Esophagus squamous epithelium (tissue), 5 donors: ENCODE measurements at regions of chr1 and their contacts with region 1.

Region 1: DNA sequence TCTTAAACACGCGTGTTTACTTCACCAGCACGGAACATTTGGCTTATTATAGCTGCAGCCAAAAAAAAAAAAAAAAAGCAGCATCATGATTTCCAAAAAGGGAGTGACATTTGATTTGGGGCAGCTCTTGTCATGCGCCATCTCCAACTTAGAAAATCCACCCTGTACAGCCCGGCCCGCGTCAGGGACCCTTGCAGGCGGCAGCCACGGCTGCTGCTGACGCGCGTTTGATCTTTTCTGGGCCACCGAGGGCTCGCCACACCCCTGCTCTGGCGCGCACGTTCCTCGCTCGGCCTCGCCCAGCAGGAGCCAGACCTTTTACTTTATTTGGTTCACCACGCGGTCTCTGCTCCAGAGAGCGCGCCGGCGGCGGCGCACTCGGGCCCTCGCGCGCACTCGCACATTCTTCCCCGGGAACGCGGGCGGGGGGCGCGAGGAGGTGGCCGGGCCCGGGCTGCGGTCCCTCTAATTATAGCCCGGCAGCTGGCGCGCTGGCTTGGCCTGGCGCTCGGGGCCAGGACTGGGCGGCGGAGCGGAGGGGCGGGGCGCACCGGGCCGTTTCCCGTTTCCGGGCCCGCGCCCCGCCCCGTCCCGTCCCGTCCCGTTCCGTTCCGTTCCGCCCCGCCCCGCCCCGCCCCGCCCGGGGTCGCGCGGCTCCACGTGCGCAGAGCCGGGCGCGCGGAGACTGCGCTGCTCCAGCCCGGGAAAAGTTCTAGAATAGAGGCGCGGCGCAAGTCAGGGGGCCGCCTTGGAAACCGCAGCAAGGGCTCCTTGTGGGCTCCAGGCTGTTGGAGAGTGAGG is 10.2 kb downstream of the IRF2BP2 start:
- DNase-seq: peak; percentile 63
- H3K4me3 ChIP-seq: peak overlapping the region; percentile 41 to 79 (median 52)
- H3K27ac ChIP-seq: peak overlapping the region; percentile 99 to 100 (median 100)
- H3K4me1 ChIP-seq: peaks cover 13 to 69% (median 45%) of the 10 kb centered on the region in 3 donors
- H3K27me3 ChIP-seq: no peaks in the 10 kb centered on the region
- CTCF ChIP-seq: peak in 1 of 6 experiments; percentile 9
- POLR2A ChIP-seq: peak in 3 of 4 donors; percentile 62 to 91 (median 81)

Region 2: GRCh38 chr1:234499119-234499942 is 100.5 kb before region 1 on chr1:
- intact Hi-C with region 1: loop called (anchors 5 kb)
- DNase-seq: peak; percentile 45
- H3K4me3 ChIP-seq: peak overlapping the region in 3 of 4 donors; percentile 24 to 51 (median 27)
- H3K27ac ChIP-seq: peak overlapping the region; percentile 87 to 94 (median 88)
- H3K4me1 ChIP-seq: peaks cover 13 to 46% (median 29%) of the 10 kb centered on the region in 3 donors
- H3K27me3 ChIP-seq: no peaks in the 10 kb centered on the region
- CTCF ChIP-seq: peak; percentile 87 to 98 (median 96)
- POLR2A ChIP-seq: no peak

Region 3: GRCh38 chr1:234533975-234534876 is 65.6 kb before region 1 on chr1:
- intact Hi-C with region 1: loop called (anchors 5 kb)
- DNase-seq: no peak
- H3K4me3 ChIP-seq: peak overlapping the region in 1 of 4 donors; percentile 20
- H3K27ac ChIP-seq: peak overlapping the region; percentile 87 to 99 (median 97)
- H3K4me1 ChIP-seq: peaks cover 83 to 100% (median 94%) of the 10 kb centered on the region in 3 donors
- H3K27me3 ChIP-seq: no peaks in the 10 kb centered on the region
- CTCF ChIP-seq: no peak
- POLR2A ChIP-seq: no peak

Region 4: DNA sequence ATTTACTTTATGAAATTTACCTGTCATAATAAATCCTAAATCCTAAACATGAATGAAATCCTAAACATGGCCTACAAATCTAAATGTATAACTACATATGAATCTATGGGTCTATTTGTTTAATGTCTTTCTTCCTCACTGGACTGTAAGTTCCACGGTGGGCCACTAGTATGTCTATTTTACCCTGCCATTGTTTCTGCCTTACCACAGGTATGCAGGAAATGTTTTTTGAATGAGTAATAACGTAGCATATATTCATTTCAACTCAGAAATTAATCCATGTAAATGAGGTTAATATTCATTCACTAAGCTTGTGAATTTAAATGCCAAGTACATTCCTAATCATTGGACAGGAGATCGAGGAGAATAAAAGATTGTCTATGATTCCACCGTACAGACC is 869.2 kb after region 1 on chr1:
- intact Hi-C with region 1: no loop called
- DNase-seq: no peak
- H3K4me3 ChIP-seq: no peak overlapping the region
- H3K27ac ChIP-seq: no peak overlapping the region
- H3K4me1 ChIP-seq: no peaks in the 10 kb centered on the region
- H3K27me3 ChIP-seq: no peaks in the 10 kb centered on the region
- CTCF ChIP-seq: peak in 1 of 6 experiments; percentile 46
- POLR2A ChIP-seq: no peak